ENCODE measurements at regions of chr5 and their contacts with region 1.

Region 1: DNA sequence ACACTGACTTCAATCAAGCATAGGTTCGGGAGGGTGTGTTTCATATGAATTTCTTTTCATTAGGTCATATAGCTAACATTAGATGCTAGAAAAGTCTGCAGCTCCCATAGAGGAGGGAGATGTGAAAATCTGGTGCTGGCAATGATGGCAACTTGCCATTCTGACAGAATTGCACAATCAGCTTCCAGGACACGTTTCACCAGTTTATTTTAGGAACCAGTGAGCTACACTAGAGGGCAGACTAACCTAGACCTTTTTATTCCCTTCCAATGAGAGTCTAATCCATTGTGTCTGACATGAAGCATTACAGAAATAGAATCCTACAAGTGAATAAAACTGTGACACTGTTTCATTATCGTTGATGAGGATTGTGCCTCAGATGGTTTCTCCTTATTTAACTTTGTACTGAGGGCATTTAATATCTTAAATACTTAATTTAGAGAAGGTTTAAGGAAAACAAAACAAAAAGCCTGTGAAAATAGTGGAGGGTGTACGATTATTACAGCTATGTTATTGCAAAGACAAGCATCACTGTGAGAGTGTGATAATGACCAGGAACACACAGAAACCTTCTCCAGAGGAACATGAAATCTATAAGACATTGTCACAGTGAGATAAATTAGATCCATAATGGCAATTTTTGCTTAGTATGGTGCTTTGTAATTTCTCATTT is 363.3 kb upstream of the RPS23 start:
- DNase-seq: peak; percentile 81
- H3K4me3 ChIP-seq: no peak overlapping the region
- H3K27ac ChIP-seq: no peak overlapping the region
- H3K4me1 ChIP-seq: no peaks in the 10 kb centered on the region
- H3K27me3 ChIP-seq: peaks cover 2% of the 10 kb centered on the region in 2 experiments
- CTCF ChIP-seq: peak; percentile 39 to 56
- POLR2A ChIP-seq: no peak

Region 2: DNA sequence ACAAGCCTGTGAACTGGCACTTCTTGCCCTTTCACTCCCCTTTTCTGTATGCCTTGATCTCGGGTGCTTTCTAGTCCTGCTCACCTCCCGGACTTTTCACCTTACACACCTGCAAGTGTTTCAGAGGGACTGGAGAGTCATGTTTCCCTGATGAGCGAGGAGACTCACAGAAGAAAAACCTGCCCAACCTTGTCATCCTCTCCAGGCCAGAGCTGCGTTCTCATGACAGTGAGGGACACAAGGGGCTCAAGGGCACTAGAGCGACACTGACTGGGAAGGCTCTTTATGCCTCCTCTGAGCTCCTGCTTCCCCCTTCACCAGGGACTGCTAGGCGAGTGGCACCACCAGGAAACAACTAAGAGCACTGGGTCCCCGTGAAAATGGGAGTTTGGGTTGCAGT is 13.6 kb after region 1 on chr5:
- CTCF ChIA-PET with region 1: interaction called, 10 read pairs
- POLR2A ChIA-PET with region 1: no interaction called
- dilution Hi-C with region 1: no loop called
- intact Hi-C with region 1: no loop called
- DNase-seq: no peak
- H3K4me3 ChIP-seq: no peak overlapping the region
- H3K27ac ChIP-seq: no peak overlapping the region
- H3K4me1 ChIP-seq: no peaks in the 10 kb centered on the region
- H3K27me3 ChIP-seq: peaks cover 0 to 7% of the 10 kb centered on the region in 2 experiments
- CTCF ChIP-seq: no peak
- POLR2A ChIP-seq: no peak

Region 3: GRCh38 chr5:82684165-82684564 is 42.7 kb after region 1 on chr5:
- CTCF ChIA-PET with region 1: no interaction called
- POLR2A ChIA-PET with region 1: no interaction called
- dilution Hi-C with region 1: no loop called
- intact Hi-C with region 1: no loop called
- DNase-seq: no peak
- H3K4me3 ChIP-seq: no peak overlapping the region
- H3K27ac ChIP-seq: no peak overlapping the region
- H3K4me1 ChIP-seq: no peaks in the 10 kb centered on the region
- H3K27me3 ChIP-seq: no peaks in the 10 kb centered on the region
- CTCF ChIP-seq: no peak
- POLR2A ChIP-seq: no peak

Region 4: DNA sequence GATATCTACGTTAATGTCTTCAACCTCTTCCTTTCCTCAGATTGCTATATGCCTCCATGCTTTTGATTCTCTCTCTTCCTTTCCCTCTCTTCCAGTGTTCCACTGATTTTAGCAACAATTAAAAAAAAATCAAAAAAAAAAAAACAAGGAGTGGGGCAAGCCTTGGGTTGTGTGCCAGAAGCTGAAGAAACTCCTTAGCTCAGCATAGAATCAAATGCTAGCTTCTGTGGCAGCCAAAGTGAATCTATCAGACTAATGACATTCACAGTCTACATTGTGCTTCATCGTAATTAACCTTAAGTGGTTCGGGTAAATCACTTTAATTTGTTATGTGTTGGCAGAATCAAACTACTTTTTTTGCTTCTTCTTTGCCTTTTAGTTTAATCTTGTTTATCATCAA is 198.4 kb after region 1 on chr5:
- CTCF ChIA-PET with region 1: no interaction called
- POLR2A ChIA-PET with region 1: no interaction called
- dilution Hi-C with region 1: no loop called
- intact Hi-C with region 1: no loop called
- DNase-seq: no peak
- H3K4me3 ChIP-seq: no peak overlapping the region
- H3K27ac ChIP-seq: no peak overlapping the region
- H3K4me1 ChIP-seq: no peaks in the 10 kb centered on the region
- H3K27me3 ChIP-seq: no peaks in the 10 kb centered on the region
- CTCF ChIP-seq: no peak
- POLR2A ChIP-seq: no peak

Region 5: GRCh38 chr5:83076742-83077661 is 435.5 kb after region 1 on chr5 and contains the starts of genes TMEM167A and XRCC4:
- CTCF ChIA-PET with region 1: no interaction called
- POLR2A ChIA-PET with region 1: no interaction called
- dilution Hi-C with region 1: no loop called
- intact Hi-C with region 1: loop called (anchors 10 kb)
- DNase-seq: peak; percentile 97
- H3K4me3 ChIP-seq: peak within 1 kb of the TSS; percentile 69 to 98 (median 93)
- H3K27ac ChIP-seq: peak within 1 kb of the TSS; percentile 85
- H3K4me1 ChIP-seq: peaks cover 14% of the 10 kb centered on the region
- H3K27me3 ChIP-seq: no peaks in the 10 kb centered on the region
- CTCF ChIP-seq: no peak
- POLR2A ChIP-seq: peak; percentile 77
- total RNA-seq, gene TMEM167A: 64.4 and 69.4 TPM in 2 replicates
- total RNA-seq, gene XRCC4: 7.6 and 7.7 TPM in 2 replicates

Region 6: DNA sequence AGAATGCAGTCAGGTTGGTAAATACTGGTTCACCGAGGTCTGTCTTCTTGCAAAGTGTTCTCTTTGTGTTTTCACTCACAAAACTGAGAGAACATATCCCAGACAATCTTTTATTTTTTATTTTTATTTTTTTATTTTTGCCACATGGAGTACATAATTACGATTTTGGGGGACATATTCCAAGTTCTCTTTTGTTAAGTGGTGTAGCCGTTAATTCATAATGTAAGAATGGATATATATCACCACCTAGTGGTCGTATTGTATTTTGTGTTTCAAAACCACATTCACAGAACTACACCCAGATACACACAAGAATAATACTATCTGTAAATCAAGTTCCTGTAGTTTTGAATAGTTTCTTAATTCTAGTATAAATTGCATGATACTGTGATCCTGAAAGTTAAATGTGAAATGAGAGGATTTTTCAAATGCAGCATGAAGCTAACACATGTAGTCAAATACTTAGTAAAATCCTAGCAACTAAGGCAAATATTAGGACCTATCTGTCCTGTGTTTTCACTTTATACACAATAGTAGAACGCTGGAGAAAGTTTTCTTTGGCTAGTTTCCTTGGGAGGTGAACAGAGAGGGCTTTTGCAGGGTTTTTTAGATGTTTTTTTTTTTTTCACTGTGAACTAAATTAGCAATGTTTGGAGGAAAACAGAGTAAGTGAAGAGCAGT is 922.7 kb after region 1 on chr5:
- CTCF ChIA-PET with region 1: interaction called, 7 read pairs
- POLR2A ChIA-PET with region 1: no interaction called
- dilution Hi-C with region 1: no loop called
- intact Hi-C with region 1: loop called (anchors 1 kb)
- DNase-seq: peak; percentile 81
- H3K4me3 ChIP-seq: no peak overlapping the region
- H3K27ac ChIP-seq: no peak overlapping the region
- H3K4me1 ChIP-seq: peaks cover 4% of the 10 kb centered on the region
- H3K27me3 ChIP-seq: peaks cover 0 to 8% of the 10 kb centered on the region in 2 experiments
- CTCF ChIP-seq: peak; percentile 16 to 24
- POLR2A ChIP-seq: no peak